ENCODE measurements at regions of chr1 and their contacts with region 1.

Region 1: GRCh38 chr1:40691538-40692428 is at the start of gene NFYC:
- DNase-seq: peak; percentile 97
- H3K4me3 Mint-ChIP-seq: peak within 1 kb of the TSS; percentile 90
- H3K27ac Mint-ChIP-seq: peak within 1 kb of the TSS; percentile 93
- H3K4me1 Mint-ChIP-seq: peaks cover 57% of the 10 kb centered on the region
- H3K27me3 Mint-ChIP-seq: no peaks in the 10 kb centered on the region
- total RNA-seq, gene NFYC: 78.7 to 84.1 TPM

Region 2: GRCh38 chr1:40599926-40600325 is 91.9 kb before region 1 on chr1:
- CTCF ChIA-PET with region 1: no interaction called
- POLR2A ChIA-PET with region 1: no interaction called
- DNase-seq: no peak
- H3K4me3 Mint-ChIP-seq: no peak overlapping the region
- H3K27ac Mint-ChIP-seq: no peak overlapping the region
- H3K4me1 Mint-ChIP-seq: no peaks in the 10 kb centered on the region
- H3K27me3 Mint-ChIP-seq: peaks cover 21% of the 10 kb centered on the region

Region 3: GRCh38 chr1:40612345-40612831 is 79.4 kb before region 1 on chr1:
- CTCF ChIA-PET with region 1: no interaction called
- POLR2A ChIA-PET with region 1: no interaction called
- DNase-seq: peak; percentile 77
- H3K4me3 Mint-ChIP-seq: no peak overlapping the region
- H3K27ac Mint-ChIP-seq: no peak overlapping the region
- H3K4me1 Mint-ChIP-seq: no peaks in the 10 kb centered on the region
- H3K27me3 Mint-ChIP-seq: peaks cover 7% of the 10 kb centered on the region

Region 4: DNA sequence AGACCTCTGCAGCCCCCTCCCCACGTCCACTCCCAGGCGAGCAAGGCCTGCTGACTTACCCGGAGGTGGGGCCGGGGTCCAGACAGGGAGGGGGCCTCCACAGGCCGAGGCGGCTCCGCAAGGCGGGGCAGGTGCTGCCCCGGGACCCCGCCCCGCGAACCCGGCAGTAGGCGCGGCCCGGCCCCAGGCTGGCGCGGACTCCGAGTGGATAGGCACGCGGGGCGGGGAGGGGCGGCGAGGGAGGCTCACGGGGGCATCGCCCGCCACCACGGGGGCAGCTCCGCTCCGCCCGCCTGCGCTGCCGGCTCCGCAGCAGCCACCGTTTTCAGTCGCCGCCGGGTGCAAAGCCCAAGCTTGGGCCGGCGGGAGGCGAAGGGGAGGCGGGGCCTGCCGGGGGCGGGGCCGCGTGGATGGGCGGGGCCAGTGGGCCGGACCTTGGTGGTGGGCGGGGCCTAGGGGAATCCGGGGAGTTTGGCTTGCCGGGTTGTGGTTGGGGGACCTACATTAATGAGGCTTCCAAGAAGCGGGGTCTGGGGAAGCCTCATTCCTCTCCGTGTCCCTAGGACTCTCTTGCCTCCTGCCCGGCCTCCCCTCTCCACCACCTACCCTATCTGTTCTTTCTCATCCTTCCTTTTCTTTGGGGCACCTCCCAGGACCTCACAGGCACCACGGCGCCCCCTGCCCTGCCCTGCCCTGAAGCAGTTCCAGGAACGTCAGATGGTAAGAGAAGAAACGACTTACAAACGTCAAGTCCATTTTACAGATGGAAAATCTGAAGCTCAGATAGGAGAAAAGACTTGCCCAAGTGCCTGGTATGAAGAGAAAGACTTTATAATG is 26.2 kb before region 1 on chr1 and contains the start of gene RIMS3:
- CTCF ChIA-PET with region 1: interaction called, 9 read pairs
- POLR2A ChIA-PET with region 1: interaction called, 51 read pairs
- DNase-seq: peak; percentile 86
- H3K4me3 Mint-ChIP-seq: peak within 1 kb of the TSS; percentile 78
- H3K27ac Mint-ChIP-seq: peak within 1 kb of the TSS; percentile 65
- H3K4me1 Mint-ChIP-seq: peaks cover 36% of the 10 kb centered on the region
- H3K27me3 Mint-ChIP-seq: peaks cover 5% of the 10 kb centered on the region
- total RNA-seq, gene RIMS3: 5.6 to 6.1 TPM

Region 5: DNA sequence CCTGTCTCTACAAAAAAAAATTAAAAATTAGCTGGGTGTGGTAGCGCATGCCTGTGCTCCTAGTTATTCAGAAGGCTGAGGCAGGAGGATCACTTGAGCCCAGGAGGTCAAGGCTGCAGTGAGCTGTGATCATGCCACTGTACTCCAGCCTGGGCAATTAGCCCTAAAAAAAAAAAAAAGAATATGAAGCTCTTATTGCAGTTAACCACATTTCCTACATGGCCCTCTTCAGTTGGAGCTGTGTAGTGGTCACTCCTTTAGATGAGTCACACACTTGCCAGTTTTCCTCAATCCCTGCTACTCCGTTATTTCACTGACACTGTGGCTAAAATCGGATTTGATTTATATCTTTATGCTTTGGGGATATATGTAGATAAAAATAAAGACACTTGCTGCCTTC is 11.5 kb after region 1 on chr1:
- CTCF ChIA-PET with region 1: interaction called, 11 read pairs
- POLR2A ChIA-PET with region 1: interaction called, 134 read pairs
- DNase-seq: no peak
- H3K4me3 Mint-ChIP-seq: no peak overlapping the region
- H3K27ac Mint-ChIP-seq: no peak overlapping the region
- H3K4me1 Mint-ChIP-seq: peaks cover 50% of the 10 kb centered on the region
- H3K27me3 Mint-ChIP-seq: no peaks in the 10 kb centered on the region

Region 6: GRCh38 chr1:40722636-40723035 is 30.9 kb after region 1 on chr1:
- CTCF ChIA-PET with region 1: no interaction called
- POLR2A ChIA-PET with region 1: interaction called, 33 read pairs
- DNase-seq: no peak
- H3K4me3 Mint-ChIP-seq: no peak overlapping the region
- H3K27ac Mint-ChIP-seq: no peak overlapping the region
- H3K4me1 Mint-ChIP-seq: peaks cover 17% of the 10 kb centered on the region
- H3K27me3 Mint-ChIP-seq: no peaks in the 10 kb centered on the region

Region 7: DNA sequence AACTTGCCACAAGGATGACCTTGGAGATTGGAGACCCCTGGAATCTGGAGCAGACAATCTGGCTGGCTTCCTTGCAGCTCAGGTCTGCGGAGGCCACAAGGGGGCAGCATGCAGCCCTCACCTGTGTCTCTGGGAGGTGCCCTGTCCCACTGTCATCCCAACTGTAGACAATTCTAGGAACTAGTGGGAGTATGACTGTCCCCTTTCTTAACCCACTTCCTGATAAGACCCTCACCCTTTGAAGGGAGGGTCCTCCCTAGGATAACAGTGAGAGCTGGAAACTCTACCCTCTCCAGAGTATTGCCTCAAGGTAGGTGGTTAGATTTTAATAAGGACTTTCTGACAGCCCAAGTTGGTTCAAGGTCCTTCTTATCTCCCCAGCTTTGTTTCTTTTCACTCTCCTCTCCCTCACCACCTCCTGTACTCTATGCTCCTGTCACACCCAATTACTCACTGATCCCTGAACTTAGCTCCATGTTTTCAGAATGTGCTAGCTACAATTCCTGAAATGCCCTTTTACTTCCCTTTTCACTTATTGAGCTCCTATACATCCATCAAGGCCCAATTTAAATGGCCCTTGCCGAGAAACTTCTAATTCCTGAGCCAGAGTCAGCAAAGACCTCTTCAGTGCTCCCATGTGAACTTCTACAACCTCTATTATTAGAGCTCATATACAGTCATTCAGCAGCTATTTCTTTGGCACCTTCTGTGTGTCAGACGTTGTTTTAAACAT is 82.6 kb after region 1 on chr1:
- CTCF ChIA-PET with region 1: interaction called, 16 read pairs
- POLR2A ChIA-PET with region 1: interaction called, 6 read pairs
- DNase-seq: peak; percentile 63
- H3K4me3 Mint-ChIP-seq: no peak overlapping the region
- H3K27ac Mint-ChIP-seq: peak overlapping the region; percentile 2
- H3K4me1 Mint-ChIP-seq: peaks cover 16% of the 10 kb centered on the region
- H3K27me3 Mint-ChIP-seq: no peaks in the 10 kb centered on the region

Region 8: DNA sequence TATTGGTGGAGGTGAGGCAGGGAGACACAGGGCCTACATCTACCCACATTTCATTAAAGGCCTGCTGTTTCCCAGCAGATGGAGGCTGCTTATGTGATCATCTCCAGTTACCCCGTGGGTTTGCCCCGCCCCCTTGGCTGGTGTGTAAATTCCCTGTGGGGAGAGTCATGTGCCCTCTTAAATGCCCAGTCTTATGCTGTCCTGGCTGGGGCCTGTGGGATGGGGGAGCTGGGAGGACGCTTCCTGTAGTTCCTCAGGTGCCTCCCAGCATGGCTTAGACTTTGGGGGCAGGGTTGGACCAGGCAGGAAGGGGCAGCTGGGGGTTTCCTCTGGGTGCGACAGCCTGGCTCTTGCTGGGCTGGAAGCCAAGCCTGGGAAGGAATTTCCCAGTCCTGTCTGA is 185.9 kb after region 1 on chr1:
- CTCF ChIA-PET with region 1: no interaction called
- POLR2A ChIA-PET with region 1: no interaction called
- DNase-seq: peak; percentile 26
- H3K4me3 Mint-ChIP-seq: no peak overlapping the region
- H3K27ac Mint-ChIP-seq: no peak overlapping the region
- H3K4me1 Mint-ChIP-seq: peaks cover 52% of the 10 kb centered on the region
- H3K27me3 Mint-ChIP-seq: peaks cover 4% of the 10 kb centered on the region

Region 9: DNA sequence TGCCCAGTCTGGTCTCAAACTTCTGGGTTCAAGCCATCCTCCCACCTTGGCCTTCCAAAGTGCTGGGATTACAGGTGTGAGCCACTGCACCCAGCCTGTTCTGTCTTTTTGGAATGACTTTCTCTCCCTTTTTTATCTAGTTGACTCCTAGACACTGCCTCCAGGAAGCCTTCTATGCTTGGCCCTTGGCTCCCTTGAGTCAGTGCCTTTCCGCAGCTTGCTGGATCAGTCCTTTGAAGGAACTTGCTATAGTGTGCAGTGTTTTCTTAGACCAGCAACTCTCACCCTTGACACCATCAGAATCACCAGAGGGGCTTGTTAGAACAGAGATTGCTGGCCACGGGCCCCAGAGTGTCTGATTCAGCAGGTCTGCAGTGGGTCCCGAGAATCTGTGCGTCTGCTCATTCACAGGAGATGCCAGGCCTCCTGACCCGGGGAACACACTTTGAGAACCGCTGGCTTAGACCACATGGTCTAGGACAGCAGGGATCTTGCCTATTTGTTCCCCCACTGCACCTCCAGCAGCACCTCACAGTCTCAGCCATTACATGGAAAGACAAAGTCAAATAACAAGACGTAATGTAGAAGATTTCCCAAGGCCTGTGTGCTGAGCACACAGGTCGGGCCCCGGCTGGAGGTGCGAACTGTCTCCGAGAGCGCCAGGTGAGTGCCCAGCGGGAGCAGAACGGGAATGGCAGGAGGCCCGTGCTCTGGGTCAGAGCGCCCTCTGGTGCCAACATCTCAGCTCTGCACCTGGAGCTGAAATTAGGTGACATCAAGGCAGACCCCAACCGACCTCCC is 260.4 kb after region 1 on chr1:
- CTCF ChIA-PET with region 1: interaction called, 11 read pairs
- POLR2A ChIA-PET with region 1: interaction called, 5 read pairs
- DNase-seq: peak; percentile 65
- H3K4me3 Mint-ChIP-seq: no peak overlapping the region
- H3K27ac Mint-ChIP-seq: no peak overlapping the region
- H3K4me1 Mint-ChIP-seq: peaks cover 21% of the 10 kb centered on the region
- H3K27me3 Mint-ChIP-seq: peaks cover 16% of the 10 kb centered on the region